Mammary epithelial cell (primary cell): ENCODE measurements at regions of chr5 and their contacts with region 1.

Region 1: DNA sequence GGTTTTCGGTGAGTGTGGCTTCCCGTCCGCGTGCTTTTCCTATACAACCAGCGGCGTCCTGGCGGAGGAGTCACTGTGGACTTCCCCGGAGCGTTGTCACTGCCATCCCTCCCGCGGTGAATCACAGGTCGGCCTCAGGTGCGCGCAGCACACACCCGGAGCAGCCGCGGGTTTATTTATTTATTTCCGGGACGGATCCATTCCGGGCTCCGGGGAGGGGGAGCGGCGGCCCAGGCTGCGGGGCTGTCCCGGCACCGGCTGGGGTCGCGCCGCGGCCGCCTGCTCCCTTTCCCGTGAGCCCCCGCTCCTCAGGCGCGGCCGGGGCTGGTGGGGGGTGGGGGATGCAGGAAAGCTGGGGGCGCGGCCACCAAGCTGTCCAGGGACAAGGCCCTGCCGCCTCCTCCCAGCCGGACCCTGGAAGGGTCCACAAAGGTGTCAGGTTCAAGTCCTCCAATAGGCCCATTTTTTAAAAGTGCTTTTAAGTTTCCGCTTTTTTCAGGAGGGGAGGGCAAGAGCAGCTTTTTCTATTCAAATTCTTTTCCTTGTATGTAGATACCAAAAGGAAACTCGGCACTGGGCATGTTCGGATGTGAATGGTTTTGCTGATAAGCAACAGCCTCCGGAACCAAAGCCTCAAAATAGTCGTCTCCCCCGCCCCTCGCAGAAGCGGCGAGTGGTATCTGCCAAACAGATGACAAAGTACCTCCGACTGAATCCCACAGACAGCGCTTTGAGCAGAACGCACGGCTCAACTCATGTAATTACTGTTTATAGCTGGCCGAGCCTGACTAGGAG is 192.5 kb downstream of the CD180 start:
- DNase-seq: peak; percentile 97
- H3K4me3 ChIP-seq: peak overlapping the region; percentile 75 to 93 (median 85)
- H3K27ac ChIP-seq: peak overlapping the region; percentile 98
- H3K4me1 ChIP-seq: peaks cover 24% of the 10 kb centered on the region
- H3K27me3 ChIP-seq: no peaks in the 10 kb centered on the region
- CTCF ChIP-seq: no peak

Region 2: GRCh38 chr5:66828548-66829357 is 175.4 kb before region 1 on chr5:
- CTCF ChIA-PET with region 1: no interaction called
- dilution Hi-C with region 1: no loop called
- in situ Hi-C with region 1: no loop called
- intact Hi-C with region 1: loop called (anchors 2 kb)
- DNase-seq: peak; percentile 89
- H3K4me3 ChIP-seq: peak overlapping the region; percentile 55 to 73 (median 61)
- H3K27ac ChIP-seq: peak overlapping the region; percentile 90
- H3K4me1 ChIP-seq: peaks cover 12% of the 10 kb centered on the region
- H3K27me3 ChIP-seq: no peaks in the 10 kb centered on the region
- CTCF ChIP-seq: no peak

Region 3: GRCh38 chr5:66891183-66891925 is 112.8 kb before region 1 on chr5:
- CTCF ChIA-PET with region 1: no interaction called
- dilution Hi-C with region 1: no loop called
- in situ Hi-C with region 1: loop called in 1 of 2 experiments (anchors 5 kb)
- intact Hi-C with region 1: no loop called
- DNase-seq: peak; percentile 99
- H3K4me3 ChIP-seq: no peak overlapping the region
- H3K27ac ChIP-seq: peak overlapping the region; percentile 100
- H3K4me1 ChIP-seq: peaks cover 56% of the 10 kb centered on the region
- H3K27me3 ChIP-seq: no peaks in the 10 kb centered on the region
- CTCF ChIP-seq: no peak

Region 4: DNA sequence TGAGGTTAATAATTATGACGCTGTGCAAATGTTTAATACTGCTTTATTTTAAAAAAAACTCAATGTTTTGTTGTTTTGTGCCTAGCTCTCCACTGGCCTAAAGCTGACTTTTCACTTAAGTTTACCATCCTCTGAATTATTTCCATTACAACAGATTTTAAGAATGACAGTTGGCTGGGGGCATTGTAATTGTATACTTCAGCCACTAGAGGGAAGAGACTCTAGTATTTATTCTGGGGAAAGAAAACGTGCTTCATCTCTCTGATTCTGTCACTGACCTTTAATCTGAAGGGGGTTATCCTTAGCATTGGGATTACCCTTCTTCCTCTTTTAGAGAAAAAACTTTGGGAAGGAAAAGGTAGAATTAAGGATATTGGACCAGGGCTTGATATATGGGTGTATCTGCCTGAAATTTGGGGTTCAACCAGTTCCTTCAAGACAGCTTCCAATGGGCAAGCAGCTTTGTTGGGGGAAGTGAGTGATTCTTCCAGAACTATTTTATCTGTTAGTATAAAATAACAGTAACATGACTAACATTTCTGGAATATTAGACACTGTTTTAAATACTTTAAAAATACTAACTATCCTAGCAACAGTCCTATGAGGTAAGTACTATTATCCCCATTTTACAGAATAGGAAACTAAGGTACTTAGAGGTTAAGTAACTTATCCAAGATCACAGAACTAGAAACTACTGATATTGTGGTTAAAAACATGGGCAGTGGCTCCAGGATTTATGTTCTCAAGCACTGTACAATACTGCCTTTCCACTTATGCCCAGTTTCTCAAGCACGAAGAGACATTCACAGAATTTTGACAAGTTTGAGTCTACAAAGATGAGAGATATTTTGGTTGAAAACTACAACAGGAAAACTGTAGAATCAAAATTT is 15.9 kb before region 1 on chr5:
- CTCF ChIA-PET with region 1: no interaction called
- dilution Hi-C with region 1: no loop called
- in situ Hi-C with region 1: no loop called
- intact Hi-C with region 1: loop called (anchors 1 kb)
- DNase-seq: no peak
- H3K4me3 ChIP-seq: no peak overlapping the region
- H3K27ac ChIP-seq: peak overlapping the region; percentile 81
- H3K4me1 ChIP-seq: peaks cover 35% of the 10 kb centered on the region
- H3K27me3 ChIP-seq: no peaks in the 10 kb centered on the region
- CTCF ChIP-seq: peak; percentile 75 to 76

Region 5: DNA sequence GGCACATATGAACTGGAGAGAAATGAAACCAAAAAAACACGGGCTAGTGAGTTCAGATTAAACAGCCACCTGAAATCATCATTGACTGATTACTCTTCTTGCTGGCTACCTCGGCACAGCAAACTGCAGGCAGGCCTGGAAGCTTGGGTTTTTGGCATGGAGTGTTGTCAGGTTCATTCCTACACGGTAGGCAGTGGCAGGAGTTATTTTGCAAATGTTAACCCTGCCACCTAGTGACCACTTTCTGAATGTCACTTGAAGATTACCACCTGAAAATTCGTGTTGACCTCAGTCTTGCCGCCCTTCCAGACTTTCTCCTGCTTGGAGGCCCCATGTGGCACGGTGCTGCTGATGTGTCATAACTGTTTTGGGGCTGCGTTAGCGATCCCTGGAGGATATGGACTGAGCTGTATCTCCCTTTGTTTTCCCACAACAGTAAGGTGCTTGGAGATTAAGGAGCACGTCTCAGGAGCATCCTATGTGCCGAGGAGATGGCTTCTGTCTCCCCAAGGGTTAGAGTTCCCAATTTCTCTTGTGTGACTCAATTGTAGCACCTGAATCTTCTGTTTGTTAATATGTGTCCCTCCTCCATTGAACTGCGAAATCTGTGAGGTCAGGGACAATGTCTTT is 205.1 kb after region 1 on chr5:
- CTCF ChIA-PET with region 1: no interaction called
- dilution Hi-C with region 1: no loop called
- in situ Hi-C with region 1: no loop called
- intact Hi-C with region 1: loop called (anchors 5 kb)
- DNase-seq: peak; percentile 84
- H3K4me3 ChIP-seq: no peak overlapping the region
- H3K27ac ChIP-seq: no peak overlapping the region
- H3K4me1 ChIP-seq: peaks cover 50% of the 10 kb centered on the region
- H3K27me3 ChIP-seq: no peaks in the 10 kb centered on the region
- CTCF ChIP-seq: peak; percentile 50 to 67